Activated CD4-positive, alpha-beta T cell treated with anti-CD3 and anti-CD28 coated beads, Interleukin-2, amount 10 ng/mL, durations not matched to agents 24 days and 14 days (primary cell): ENCODE measurements at regions of chrX and their contacts with region 1.

Region 1: DNA sequence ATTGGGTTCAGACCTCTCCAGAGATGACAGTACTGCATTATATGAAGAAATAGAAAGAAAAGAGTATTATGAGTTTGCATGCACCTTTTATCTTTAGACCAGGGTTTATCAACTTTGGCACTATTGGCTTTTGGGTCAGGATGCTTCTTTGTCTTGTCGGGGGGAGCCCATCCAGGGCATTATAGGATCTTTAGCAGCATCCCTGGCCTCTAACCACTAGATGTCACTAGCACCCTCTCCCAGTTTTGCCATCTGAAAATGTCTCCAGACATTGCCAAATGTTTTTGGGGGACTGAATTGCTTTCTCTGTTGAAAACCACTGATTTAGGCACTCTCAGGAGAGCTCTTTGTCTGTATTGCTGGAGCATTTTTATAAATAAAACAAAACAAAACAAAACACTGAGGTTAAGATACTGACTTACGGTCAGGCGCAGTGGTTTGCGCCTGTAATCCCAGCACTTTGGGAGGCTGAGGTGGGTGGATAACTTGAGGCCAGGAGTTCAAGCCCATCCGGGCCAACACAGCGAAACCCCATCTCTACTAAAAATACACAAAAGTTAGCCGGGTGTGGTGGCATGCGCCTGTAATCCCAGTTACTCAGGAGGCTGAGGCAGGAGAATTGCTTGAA is 23.6 kb downstream of the CA5B start:
- DNase-seq: peak; percentile 80
- H3K4me3 Mint-ChIP-seq: no peak overlapping the region
- H3K27ac Mint-ChIP-seq: no peak overlapping the region
- H3K4me1 Mint-ChIP-seq: peaks cover 16% of the 10 kb centered on the region
- H3K27me3 Mint-ChIP-seq: no peaks in the 10 kb centered on the region

Region 2: DNA sequence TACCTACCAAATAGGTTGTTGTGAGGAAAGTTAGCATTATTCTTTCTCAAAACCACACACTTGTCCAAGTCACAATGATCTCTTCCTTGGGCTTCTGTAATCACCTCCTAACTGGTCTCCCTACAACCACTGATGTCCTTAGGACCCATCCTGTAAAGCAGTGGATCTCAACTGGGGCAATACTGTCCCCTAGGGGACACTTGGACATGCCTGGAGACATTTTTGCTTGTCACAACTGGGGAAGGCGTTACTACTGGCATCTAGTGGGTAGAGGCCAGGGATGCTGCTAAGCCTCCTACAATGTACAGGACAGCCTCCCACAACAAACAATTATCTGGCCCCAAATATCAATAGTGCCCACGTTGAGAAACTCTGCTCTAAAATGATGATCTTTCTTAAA is 211.6 kb after region 1 on chrX:
- intact Hi-C with region 1: loop called (anchors 2 kb)
- DNase-seq: peak; percentile 58
- H3K4me3 Mint-ChIP-seq: no peak overlapping the region
- H3K27ac Mint-ChIP-seq: no peak overlapping the region
- H3K4me1 Mint-ChIP-seq: peaks cover 2% of the 10 kb centered on the region
- H3K27me3 Mint-ChIP-seq: peaks cover 1% of the 10 kb centered on the region

Region 3: GRCh38 chrX:16023790-16024734 is 262.4 kb after region 1 on chrX:
- intact Hi-C with region 1: no loop called
- DNase-seq: no peak
- H3K4me3 Mint-ChIP-seq: no peak overlapping the region
- H3K27ac Mint-ChIP-seq: no peak overlapping the region
- H3K4me1 Mint-ChIP-seq: peaks cover 2% of the 10 kb centered on the region
- H3K27me3 Mint-ChIP-seq: no peaks in the 10 kb centered on the region

Region 4: DNA sequence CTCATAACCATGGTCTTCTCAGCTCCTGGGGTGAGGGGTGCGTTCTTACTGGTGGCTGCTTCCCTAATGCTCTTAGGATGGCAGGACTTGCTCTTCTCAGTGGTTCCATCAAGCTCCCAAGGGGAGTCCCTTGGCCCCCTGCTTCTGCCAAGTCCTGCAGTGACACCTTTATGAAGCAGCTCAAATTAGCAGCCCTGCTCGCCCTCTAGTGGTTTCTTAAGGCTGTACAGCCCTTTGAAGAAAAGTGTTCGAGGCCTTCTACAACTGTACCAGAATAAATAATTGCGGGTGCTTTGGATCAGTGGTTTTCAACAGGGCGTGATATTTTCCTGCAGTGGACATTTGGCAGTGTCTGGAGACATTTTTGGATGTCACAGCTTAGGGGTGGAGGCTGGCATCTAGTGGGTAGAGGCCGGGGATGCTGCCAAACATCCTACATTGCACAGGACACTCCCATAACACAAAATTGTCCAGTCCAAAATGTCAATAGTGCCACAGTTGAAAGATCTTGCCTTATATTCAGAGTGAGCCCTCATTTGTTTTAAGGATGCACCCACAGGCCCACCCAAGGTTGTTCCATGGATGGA is 683.6 kb after region 1 on chrX:
- intact Hi-C with region 1: loop called (anchors 10 kb)
- DNase-seq: peak; percentile 75
- H3K4me3 Mint-ChIP-seq: no peak overlapping the region
- H3K27ac Mint-ChIP-seq: no peak overlapping the region
- H3K4me1 Mint-ChIP-seq: peaks cover 4% of the 10 kb centered on the region
- H3K27me3 Mint-ChIP-seq: peaks cover 3% of the 10 kb centered on the region